ENCODE measurements at regions of chr2 and their contacts with region 1.

Region 1: DNA sequence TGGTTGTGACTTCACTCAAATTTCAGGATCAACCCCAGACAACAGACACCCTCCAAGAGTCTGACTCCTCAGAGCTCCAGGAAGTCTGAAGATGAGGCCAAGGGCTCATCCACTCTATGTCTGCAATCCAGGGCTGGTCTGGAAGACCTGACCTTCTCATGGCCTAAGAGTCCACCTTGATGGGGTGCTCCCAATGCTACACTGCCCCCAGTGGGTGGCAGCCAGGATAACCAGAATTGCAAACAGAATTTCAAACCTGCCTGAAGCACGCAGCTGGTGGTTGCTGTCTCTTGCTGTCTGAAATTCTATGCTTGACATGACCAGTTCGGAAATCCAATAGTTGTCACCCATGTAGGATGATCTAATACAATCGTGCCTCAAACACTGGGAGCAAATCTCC is 96.0 kb downstream of the UXS1 start:
- DNase-seq: no peak
- H3K4me3 ChIP-seq: no peak overlapping the region
- H3K27ac ChIP-seq: no peak overlapping the region
- H3K4me1 ChIP-seq: no peaks in the 10 kb centered on the region
- H3K27me3 ChIP-seq: no peaks in the 10 kb centered on the region
- CTCF ChIP-seq: peak in 1 of 4 experiments; percentile 8
- POLR2A ChIP-seq: no peak

Region 2: DNA sequence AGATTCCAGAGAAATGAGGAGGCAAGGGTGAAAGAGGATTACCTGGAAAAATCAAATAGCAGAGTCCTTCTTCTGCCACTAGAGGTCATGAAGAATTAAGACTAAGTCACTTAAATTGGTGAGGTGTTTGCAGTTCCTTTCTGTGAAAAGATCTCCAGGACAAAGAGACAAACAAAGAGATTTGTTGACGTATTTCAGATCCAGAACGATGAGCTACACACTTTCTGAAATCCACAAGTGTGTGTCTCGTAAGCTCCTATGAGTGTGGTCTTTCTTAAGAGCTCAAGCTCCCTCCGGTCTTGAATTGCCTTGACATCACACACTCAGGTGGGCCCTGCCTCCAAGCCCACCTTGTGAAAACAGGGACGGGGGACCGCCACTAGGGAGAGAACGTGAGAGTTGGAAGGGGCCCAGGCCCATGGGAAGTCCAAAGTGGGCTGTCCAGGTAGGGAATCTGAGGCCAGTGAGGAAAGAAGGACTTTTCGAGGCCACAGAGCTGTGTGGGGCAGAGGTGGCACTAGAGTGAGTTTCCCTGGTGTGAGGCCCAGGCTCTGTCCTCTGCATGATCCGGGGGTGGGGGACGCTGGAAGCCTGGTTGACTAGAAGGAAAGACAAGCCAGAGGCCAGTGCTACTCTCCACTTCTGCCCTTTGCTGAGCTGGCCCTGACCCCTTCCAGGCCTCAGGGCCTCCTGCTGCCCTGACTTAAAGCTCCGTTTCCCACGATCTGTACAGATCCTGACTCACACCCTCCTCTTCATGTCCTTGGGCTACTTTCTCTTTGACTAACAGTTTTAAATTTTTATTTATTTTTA is 521.4 kb before region 1 on chr2:
- intact Hi-C with region 1: loop called (anchors 5 kb)
- DNase-seq: no peak
- H3K4me3 ChIP-seq: no peak overlapping the region
- H3K27ac ChIP-seq: no peak overlapping the region
- H3K4me1 ChIP-seq: no peaks in the 10 kb centered on the region
- H3K27me3 ChIP-seq: no peaks in the 10 kb centered on the region
- CTCF ChIP-seq: peak in 3 of 4 experiments; percentile 54 to 69 (median 63)
- POLR2A ChIP-seq: no peak

Measured in prostate gland (tissue), 2 donors.